ENCODE measurements at regions of chr7 and their contacts with region 1.

Region 1: DNA sequence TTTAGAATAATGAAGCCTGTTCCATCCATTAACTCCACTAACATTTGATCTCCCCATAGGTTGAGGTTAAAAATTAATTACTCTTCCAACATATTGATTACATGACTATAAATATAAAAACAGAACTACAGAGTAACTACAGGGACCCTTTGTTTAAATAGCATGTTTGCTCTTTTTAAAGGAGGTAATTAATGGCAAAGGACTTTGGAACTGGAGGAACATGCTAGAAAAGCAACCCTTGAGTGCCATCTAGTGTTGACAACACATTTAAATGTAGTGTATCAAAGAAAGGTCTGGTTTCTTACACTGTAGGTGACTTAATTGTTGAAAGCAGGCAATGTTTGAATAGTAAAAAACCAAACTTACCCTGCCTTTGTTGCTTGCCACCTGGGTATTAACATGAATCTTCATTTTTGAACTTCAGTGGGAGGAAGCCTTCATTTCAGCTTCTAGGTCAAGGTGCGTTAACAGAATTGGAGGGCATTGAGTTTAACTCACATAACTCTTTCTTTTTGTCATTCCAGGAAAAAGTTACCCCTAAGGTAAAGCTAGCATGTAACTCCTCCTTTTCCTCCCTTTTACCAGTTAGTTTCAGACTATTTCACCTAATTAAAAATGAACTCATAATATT is 52.6 kb upstream of the CAPZA2 start:
- DNase-seq: peak; percentile 77
- ATAC-seq: peak; percentile 88
- H3K4me3 ChIP-seq: no peak overlapping the region
- H3K27ac ChIP-seq: no peak overlapping the region
- H3K4me1 ChIP-seq: peaks cover 6% of the 10 kb centered on the region
- H3K27me3 ChIP-seq: no peaks in the 10 kb centered on the region
- CTCF ChIP-seq: peak; percentile 79
- POLR2A ChIP-seq: no peak
- RAD21 ChIP-seq: peak; percentile 93

Region 2: GRCh38 chr7:116138202-116138801 is 671.4 kb before region 1 on chr7:
- CTCF ChIA-PET with region 1: no interaction called
- POLR2A ChIA-PET with region 1: no interaction called
- dilution Hi-C with region 1: no loop called
- in situ Hi-C with region 1: no loop called
- intact Hi-C with region 1: loop called (anchors 5 kb)
- DNase-seq: peak; percentile 83
- ATAC-seq: peak; percentile 90
- H3K4me3 ChIP-seq: no peak overlapping the region
- H3K27ac ChIP-seq: no peak overlapping the region
- H3K4me1 ChIP-seq: peaks cover 9% of the 10 kb centered on the region
- H3K27me3 ChIP-seq: no peaks in the 10 kb centered on the region
- CTCF ChIP-seq: peak; percentile 88
- POLR2A ChIP-seq: no peak
- RAD21 ChIP-seq: peak; percentile 84

Region 3: DNA sequence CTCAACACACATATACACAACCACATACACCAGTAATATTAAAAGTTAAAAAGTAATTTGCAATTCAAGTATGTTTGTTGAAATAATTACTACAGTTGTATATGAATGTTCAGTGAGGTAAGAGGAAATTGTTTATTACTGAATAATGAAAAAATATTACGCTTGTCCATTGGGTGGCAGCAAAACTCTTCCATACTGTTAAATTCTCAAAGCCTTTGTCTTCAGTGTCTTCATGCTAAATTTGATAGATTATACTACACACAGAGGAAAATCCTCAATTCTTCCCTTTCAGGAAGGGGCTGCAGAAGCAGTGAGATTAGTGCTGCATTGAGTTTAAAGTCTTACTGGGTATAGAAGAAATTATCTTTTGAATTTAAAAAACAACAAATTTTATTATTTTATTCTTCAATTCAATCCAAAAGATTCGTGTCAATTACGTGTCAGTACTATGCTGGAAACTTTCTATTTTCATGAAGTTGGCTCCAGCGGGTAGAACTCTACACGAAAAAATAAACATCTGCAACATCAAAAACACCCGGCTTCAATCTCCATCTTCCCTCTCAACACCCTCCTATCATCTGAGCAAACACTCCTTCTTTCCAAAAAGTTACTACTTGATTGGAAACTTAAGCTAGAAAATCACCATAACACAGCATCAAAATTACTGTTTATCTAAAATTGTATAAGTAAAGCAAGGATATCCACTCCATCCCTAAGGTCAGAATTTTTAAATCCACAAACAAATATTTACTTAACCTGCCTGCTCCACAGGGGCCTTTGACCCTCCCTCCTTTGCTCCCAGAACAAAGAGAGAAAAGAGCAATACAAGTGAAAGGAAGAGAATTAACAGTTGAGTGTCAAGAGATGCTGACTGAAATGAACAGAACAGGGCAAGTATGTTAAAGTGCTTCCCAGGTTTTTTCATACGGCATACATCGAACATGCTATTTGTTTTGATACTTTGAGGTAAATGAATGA is 636.4 kb before region 1 on chr7:
- CTCF ChIA-PET with region 1: no interaction called
- POLR2A ChIA-PET with region 1: no interaction called
- dilution Hi-C with region 1: no loop called
- in situ Hi-C with region 1: loop called (anchors 10 kb)
- intact Hi-C with region 1: loop called (anchors 2 kb)
- DNase-seq: peak; percentile 69
- ATAC-seq: peak; percentile 31
- H3K4me3 ChIP-seq: no peak overlapping the region
- H3K27ac ChIP-seq: no peak overlapping the region
- H3K4me1 ChIP-seq: peaks cover 15% of the 10 kb centered on the region
- H3K27me3 ChIP-seq: no peaks in the 10 kb centered on the region
- CTCF ChIP-seq: peak; percentile 71
- POLR2A ChIP-seq: no peak
- RAD21 ChIP-seq: peak; percentile 87

Region 4: GRCh38 chr7:116242178-116242577 is 567.6 kb before region 1 on chr7:
- CTCF ChIA-PET with region 1: no interaction called
- POLR2A ChIA-PET with region 1: no interaction called
- dilution Hi-C with region 1: no loop called
- in situ Hi-C with region 1: no loop called
- intact Hi-C with region 1: loop called (anchors 2 kb)
- DNase-seq: peak; percentile 51
- ATAC-seq: peak; percentile 69
- H3K4me3 ChIP-seq: no peak overlapping the region
- H3K27ac ChIP-seq: no peak overlapping the region
- H3K4me1 ChIP-seq: peaks cover 2% of the 10 kb centered on the region; the same call in 1 of the 2 replicates
- H3K27me3 ChIP-seq: no peaks in the 10 kb centered on the region
- CTCF ChIP-seq: peak; percentile 54
- POLR2A ChIP-seq: no peak
- RAD21 ChIP-seq: peak; percentile 44

Region 5: GRCh38 chr7:116258734-116259133 is 551.0 kb before region 1 on chr7:
- CTCF ChIA-PET with region 1: no interaction called
- POLR2A ChIA-PET with region 1: no interaction called
- dilution Hi-C with region 1: no loop called
- in situ Hi-C with region 1: loop called (anchors 5 kb)
- intact Hi-C with region 1: loop called (anchors 5 kb)
- DNase-seq: peak; percentile 79
- ATAC-seq: peak; percentile 75
- H3K4me3 ChIP-seq: no peak overlapping the region
- H3K27ac ChIP-seq: peak overlapping the region; percentile 49; the same call in 1 of the 2 replicates
- H3K4me1 ChIP-seq: peaks cover 11% of the 10 kb centered on the region; the same call in 1 of the 2 replicates
- H3K27me3 ChIP-seq: no peaks in the 10 kb centered on the region
- CTCF ChIP-seq: peak; percentile 91
- POLR2A ChIP-seq: 0 out of 2 replicates have a peak, but pooled peaks have one; percentile 39
- RAD21 ChIP-seq: peak; percentile 95

Region 6: GRCh38 chr7:116671681-116672595 is 137.8 kb before region 1 on chr7 and contains the start of gene MET:
- CTCF ChIA-PET with region 1: interaction called, 8 read pairs
- POLR2A ChIA-PET with region 1: no interaction called
- dilution Hi-C with region 1: no loop called
- in situ Hi-C with region 1: no loop called
- intact Hi-C with region 1: loop called (anchors 1 kb)
- DNase-seq: peak; percentile 72
- ATAC-seq: peak; percentile 93
- H3K4me3 ChIP-seq: peak within 1 kb of the TSS; percentile 69
- H3K27ac ChIP-seq: peak within 1 kb of the TSS; percentile 78
- H3K4me1 ChIP-seq: peaks cover 5% of the 10 kb centered on the region
- H3K27me3 ChIP-seq: no peaks in the 10 kb centered on the region
- CTCF ChIP-seq: peak; percentile 68
- POLR2A ChIP-seq: peak; percentile 50; the same call in 1 of the 2 replicates
- RAD21 ChIP-seq: peak; percentile 82
- total RNA-seq, gene MET: 68.0 and 84.6 TPM in 2 replicates